ENCODE measurements at regions of chr2 and their contacts with region 1.

Region 1: GRCh38 chr2:22912398-22912797 is 472.6 kb upstream of the KLHL29 start:
- DNase-seq: no peak
- H3K4me3 ChIP-seq: no peak overlapping the region
- H3K27ac ChIP-seq: no peak overlapping the region
- H3K4me1 ChIP-seq: no peaks in the 10 kb centered on the region
- H3K27me3 ChIP-seq: no peaks in the 10 kb centered on the region
- CTCF ChIP-seq: no peak
- POLR2A ChIP-seq: no peak

Region 2: GRCh38 chr2:22894761-22895160 is 17.6 kb before region 1 on chr2:
- intact Hi-C with region 1: loop called (anchors 1 kb)
- DNase-seq: peak in 1 of 2 donors; percentile 44
- H3K4me3 ChIP-seq: no peak overlapping the region
- H3K27ac ChIP-seq: no peak overlapping the region
- H3K4me1 ChIP-seq: no peaks in the 10 kb centered on the region
- H3K27me3 ChIP-seq: no peaks in the 10 kb centered on the region
- CTCF ChIP-seq: no peak
- POLR2A ChIP-seq: no peak

Measured in vagina (tissue), 2 donors.